Activated CD4-positive, alpha-beta memory T cell treated with anti-CD3 and anti-CD28 coated beads, Interleukin-2, amount 10 ng/mL, durations not matched to agents 7 days and 5 days (primary cell): ENCODE measurements at regions of chr9 and their contacts with region 1.

Region 1: DNA sequence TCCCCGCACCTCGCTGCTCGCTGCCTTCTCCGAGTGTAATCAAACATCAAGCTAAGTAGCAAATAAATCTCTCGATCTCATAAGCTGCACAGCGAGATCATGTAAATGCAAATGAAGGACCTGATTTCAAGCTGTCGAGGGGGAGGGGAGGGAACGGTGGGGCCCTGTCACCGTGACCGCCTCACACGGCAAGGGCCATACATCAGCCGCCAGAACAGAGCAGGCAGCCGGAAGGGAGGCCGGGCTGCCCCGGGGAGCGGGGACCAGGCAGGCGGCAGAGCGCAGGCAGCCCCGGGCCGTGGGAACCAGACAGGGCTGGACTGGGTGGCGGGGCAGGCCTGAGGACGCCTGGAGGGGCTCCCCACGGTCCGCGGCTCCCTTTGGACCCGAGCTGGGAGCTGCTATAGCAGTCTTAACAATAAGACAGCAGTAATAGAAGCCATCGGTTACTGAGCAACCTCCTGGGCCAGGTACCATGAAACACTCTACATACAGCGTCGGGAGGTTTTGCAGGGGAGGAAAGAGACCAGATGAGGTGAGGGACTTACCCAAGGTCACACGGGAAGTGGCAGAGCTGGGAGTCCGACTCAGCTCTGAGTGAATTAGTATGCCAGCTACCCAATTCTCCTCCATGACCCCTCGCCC is 76.8 kb downstream of the CFAP77 start:
- DNase-seq: peak; percentile 61
- H3K4me3 Mint-ChIP-seq: peak overlapping the region; percentile 61
- H3K27ac Mint-ChIP-seq: peak overlapping the region; percentile 83
- H3K4me1 Mint-ChIP-seq: peaks cover 22% of the 10 kb centered on the region
- H3K27me3 Mint-ChIP-seq: peaks cover 42% of the 10 kb centered on the region

Region 2: DNA sequence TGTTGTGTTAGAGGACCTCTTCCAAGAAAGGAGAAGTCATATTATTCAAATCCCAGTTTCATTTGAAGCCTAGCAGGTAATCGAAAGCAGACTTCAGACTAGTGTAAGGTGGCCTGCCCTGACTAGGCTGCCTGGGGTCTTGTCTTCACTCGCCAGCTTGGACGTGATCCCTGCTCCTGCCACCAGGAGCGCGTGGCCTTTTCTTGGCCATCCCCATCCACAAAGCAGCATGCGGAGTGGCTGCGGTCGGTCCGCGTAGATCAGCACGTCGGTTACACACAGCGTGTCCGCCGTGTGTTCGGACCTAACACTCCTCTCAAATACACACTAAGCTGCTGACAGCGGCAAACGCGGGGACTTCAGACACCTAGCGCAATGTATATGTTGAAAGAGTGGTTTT is 39.5 kb before region 1 on chr9:
- CTCF ChIA-PET with region 1: no interaction called
- POLR2A ChIA-PET with region 1: no interaction called
- DNase-seq: no peak
- H3K4me3 Mint-ChIP-seq: no peak overlapping the region
- H3K27ac Mint-ChIP-seq: no peak overlapping the region
- H3K4me1 Mint-ChIP-seq: peaks cover 10% of the 10 kb centered on the region
- H3K27me3 Mint-ChIP-seq: peaks cover 52% of the 10 kb centered on the region

Region 3: GRCh38 chr9:132507746-132508469 is 21.1 kb after region 1 on chr9:
- CTCF ChIA-PET with region 1: interaction called, 11 read pairs
- POLR2A ChIA-PET with region 1: no interaction called
- DNase-seq: peak; percentile 71
- H3K4me3 Mint-ChIP-seq: no peak overlapping the region
- H3K27ac Mint-ChIP-seq: no peak overlapping the region
- H3K4me1 Mint-ChIP-seq: peaks cover 15% of the 10 kb centered on the region
- H3K27me3 Mint-ChIP-seq: peaks cover 15% of the 10 kb centered on the region